ENCODE measurements at regions of chr13 and their contacts with region 1.

Region 1: GRCh38 chr13:24160454-24161009 is at the start of gene SPATA13:
- DNase-seq: peak; percentile 87 to 97 (median 94)
- ATAC-seq: peak; percentile 96
- H3K4me3 ChIP-seq: peak within 1 kb of the TSS; percentile 87 to 89
- H3K4me3 Mint-ChIP-seq: peak within 1 kb of the TSS; percentile 87
- H3K27ac ChIP-seq: peak within 1 kb of the TSS; percentile 29 to 56
- H3K27ac Mint-ChIP-seq: peak within 1 kb of the TSS; percentile 72
- H3K4me1 ChIP-seq: peaks cover 16% of the 10 kb centered on the region
- H3K4me1 Mint-ChIP-seq: peaks cover 26% of the 10 kb centered on the region
- H3K27me3 ChIP-seq: no peaks in the 10 kb centered on the region
- H3K27me3 Mint-ChIP-seq: no peaks in the 10 kb centered on the region
- CTCF ChIP-seq: no peak
- total RNA-seq, gene SPATA13: 102 to 106 TPM

Region 2: GRCh38 chr13:23888658-23889614 is 271.6 kb before region 1 on chr13 and contains the start of gene MIPEP:
- CTCF ChIA-PET with region 1: no interaction called
- POLR2A ChIA-PET with region 1: no interaction called
- intact Hi-C with region 1: loop called (anchors 1 to 5 kb)
- DNase-seq: peak; percentile 73 to 95 (median 87)
- ATAC-seq: peak; percentile 93
- H3K4me3 ChIP-seq: peak within 1 kb of the TSS; percentile 79
- H3K4me3 Mint-ChIP-seq: peak within 1 kb of the TSS; percentile 90
- H3K27ac ChIP-seq: peak within 1 kb of the TSS; percentile 61 to 71
- H3K27ac Mint-ChIP-seq: peak within 1 kb of the TSS; percentile 88
- H3K4me1 ChIP-seq: peaks cover 7% of the 10 kb centered on the region
- H3K4me1 Mint-ChIP-seq: peaks cover 23% of the 10 kb centered on the region
- H3K27me3 ChIP-seq: no peaks in the 10 kb centered on the region
- H3K27me3 Mint-ChIP-seq: peaks cover 3% of the 10 kb centered on the region
- CTCF ChIP-seq: peak; percentile 65
- total RNA-seq, gene MIPEP: 3.0 to 3.8 TPM

Region 3: GRCh38 chr13:23980160-23980551 is 180.4 kb before region 1 on chr13:
- CTCF ChIA-PET with region 1: no interaction called
- POLR2A ChIA-PET with region 1: no interaction called
- intact Hi-C with region 1: loop called (anchors 2 to 5 kb)
- DNase-seq: peak; percentile 84 to 96 (median 90)
- ATAC-seq: peak; percentile 92
- H3K4me3 ChIP-seq: peak overlapping the region; percentile 56 to 79
- H3K4me3 Mint-ChIP-seq: peak overlapping the region; percentile 86
- H3K27ac ChIP-seq: peak overlapping the region in 1 of 2 experiments; percentile 51
- H3K27ac Mint-ChIP-seq: peak overlapping the region; percentile 34
- H3K4me1 ChIP-seq: peaks cover 10% of the 10 kb centered on the region
- H3K4me1 Mint-ChIP-seq: peaks cover 8% of the 10 kb centered on the region
- H3K27me3 ChIP-seq: peaks cover 8 to 10% of the 10 kb centered on the region in 2 experiments
- H3K27me3 Mint-ChIP-seq: peaks cover 17% of the 10 kb centered on the region
- CTCF ChIP-seq: no peak

Region 4: DNA sequence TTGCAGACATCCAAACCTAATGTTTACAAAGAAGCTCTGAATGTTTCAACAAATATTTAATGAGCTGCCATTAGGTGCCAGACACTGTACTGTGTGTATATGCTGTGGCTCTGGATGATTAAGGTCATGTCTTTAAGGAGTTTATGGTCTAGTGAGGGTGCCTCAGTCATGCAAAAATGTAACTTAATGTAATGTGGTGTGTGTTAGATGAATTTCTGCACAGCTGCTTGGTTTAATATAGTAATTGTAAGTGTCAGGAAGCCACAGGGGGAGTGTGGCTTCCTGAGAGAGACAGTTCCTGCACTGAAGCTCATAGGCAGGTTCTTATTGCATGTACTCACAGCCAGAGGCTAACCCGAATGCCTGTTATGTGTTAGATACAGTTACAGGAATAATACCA is 43.3 kb after region 1 on chr13:
- CTCF ChIA-PET with region 1: interaction called, 8 read pairs
- POLR2A ChIA-PET with region 1: interaction called, 10 read pairs
- intact Hi-C with region 1: loop called in 1 of 2 experiments (anchors 5 kb)
- DNase-seq: peak in 2 of 9 experiments; percentile 43 to 62
- ATAC-seq: peak; percentile 94
- H3K4me3 ChIP-seq: no peak overlapping the region
- H3K4me3 Mint-ChIP-seq: peak overlapping the region; percentile 72
- H3K27ac ChIP-seq: no peak overlapping the region
- H3K27ac Mint-ChIP-seq: peak overlapping the region; percentile 56
- H3K4me1 ChIP-seq: peaks cover 23% of the 10 kb centered on the region
- H3K4me1 Mint-ChIP-seq: peaks cover 31% of the 10 kb centered on the region
- H3K27me3 ChIP-seq: no peaks in the 10 kb centered on the region
- H3K27me3 Mint-ChIP-seq: no peaks in the 10 kb centered on the region
- CTCF ChIP-seq: no peak

Region 5: DNA sequence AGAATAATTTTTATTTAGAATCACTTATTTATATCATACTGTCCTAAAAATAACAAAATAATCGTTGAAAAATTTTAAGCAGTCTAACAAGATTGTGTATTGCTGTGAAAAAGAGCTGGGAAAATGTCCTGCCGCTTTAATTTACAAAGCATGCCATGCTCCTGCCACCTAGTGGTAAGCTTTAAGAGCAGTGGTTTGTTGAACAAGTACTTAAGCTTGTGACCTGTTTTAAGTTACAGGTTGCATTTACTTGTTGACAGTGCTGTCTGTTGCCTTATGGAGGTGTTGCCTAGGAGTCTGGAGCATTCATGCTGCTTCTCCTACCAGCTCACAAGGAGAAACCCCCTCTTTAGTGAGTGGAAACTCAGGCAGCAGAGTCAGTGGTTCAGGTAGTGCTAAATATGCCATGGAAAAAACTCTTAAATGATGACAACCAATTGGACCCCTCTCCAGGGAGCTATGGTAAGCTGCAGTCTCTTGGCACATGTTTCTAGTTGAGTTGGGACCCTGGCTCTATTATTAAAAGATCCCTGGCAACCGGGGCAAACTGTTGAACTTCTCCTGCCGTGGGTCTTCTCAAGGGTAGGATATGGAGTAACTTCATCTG is 68.4 kb after region 1 on chr13:
- CTCF ChIA-PET with region 1: interaction called, 10 read pairs
- POLR2A ChIA-PET with region 1: interaction called, 4 read pairs
- intact Hi-C with region 1: loop called (anchors 5 kb)
- DNase-seq: peak in 5 of 9 experiments; percentile 34 to 80 (median 49)
- ATAC-seq: peak; percentile 51
- H3K4me3 ChIP-seq: no peak overlapping the region
- H3K4me3 Mint-ChIP-seq: no peak overlapping the region
- H3K27ac ChIP-seq: no peak overlapping the region
- H3K27ac Mint-ChIP-seq: no peak overlapping the region
- H3K4me1 ChIP-seq: peaks cover 23% of the 10 kb centered on the region
- H3K4me1 Mint-ChIP-seq: peaks cover 51% of the 10 kb centered on the region
- H3K27me3 ChIP-seq: no peaks in the 10 kb centered on the region
- H3K27me3 Mint-ChIP-seq: no peaks in the 10 kb centered on the region
- CTCF ChIP-seq: peak; percentile 93

Region 6: GRCh38 chr13:24254146-24254841 is 93.8 kb after region 1 on chr13:
- CTCF ChIA-PET with region 1: no interaction called
- POLR2A ChIA-PET with region 1: no interaction called
- intact Hi-C with region 1: loop called in 1 of 2 experiments (anchors 2 kb)
- DNase-seq: peak in 8 of 9 experiments; percentile 44 to 91 (median 69)
- ATAC-seq: peak; percentile 58
- H3K4me3 ChIP-seq: peak overlapping the region; percentile 73 to 94
- H3K4me3 Mint-ChIP-seq: peak overlapping the region; percentile 91
- H3K27ac ChIP-seq: peak overlapping the region; percentile 77 to 84
- H3K27ac Mint-ChIP-seq: peak overlapping the region; percentile 98
- H3K4me1 ChIP-seq: peaks cover 85% of the 10 kb centered on the region
- H3K4me1 Mint-ChIP-seq: peaks cover 94% of the 10 kb centered on the region
- H3K27me3 ChIP-seq: no peaks in the 10 kb centered on the region
- H3K27me3 Mint-ChIP-seq: no peaks in the 10 kb centered on the region
- CTCF ChIP-seq: no peak

Measured in CD8-positive, alpha-beta T cell (primary cell).